CD8-positive, alpha-beta T cell (primary cell): ENCODE measurements at regions of chr9 and their contacts with region 1.

Region 1: GRCh38 chr9:101578378-101578777 is 16.4 kb downstream of the PPP3R2 start:
- DNase-seq: no peak
- ATAC-seq: no peak
- H3K4me3 ChIP-seq: no peak overlapping the region
- H3K4me3 Mint-ChIP-seq: no peak overlapping the region
- H3K27ac ChIP-seq: no peak overlapping the region
- H3K27ac Mint-ChIP-seq: no peak overlapping the region
- H3K4me1 ChIP-seq: peaks cover 17% of the 10 kb centered on the region
- H3K4me1 Mint-ChIP-seq: peaks cover 17% of the 10 kb centered on the region
- H3K27me3 ChIP-seq: no peaks in the 10 kb centered on the region
- H3K27me3 Mint-ChIP-seq: no peaks in the 10 kb centered on the region
- CTCF ChIP-seq: no peak

Region 2: GRCh38 chr9:101307051-101307450 is 271.3 kb before region 1 on chr9:
- CTCF ChIA-PET with region 1: no interaction called
- POLR2A ChIA-PET with region 1: no interaction called
- intact Hi-C with region 1: no loop called
- DNase-seq: no peak
- ATAC-seq: no peak
- H3K4me3 ChIP-seq: no peak overlapping the region
- H3K4me3 Mint-ChIP-seq: no peak overlapping the region
- H3K27ac ChIP-seq: no peak overlapping the region
- H3K27ac Mint-ChIP-seq: no peak overlapping the region
- H3K4me1 ChIP-seq: no peaks in the 10 kb centered on the region
- H3K4me1 Mint-ChIP-seq: no peaks in the 10 kb centered on the region
- H3K27me3 ChIP-seq: no peaks in the 10 kb centered on the region
- H3K27me3 Mint-ChIP-seq: peaks cover 9% of the 10 kb centered on the region
- CTCF ChIP-seq: no peak

Region 3: DNA sequence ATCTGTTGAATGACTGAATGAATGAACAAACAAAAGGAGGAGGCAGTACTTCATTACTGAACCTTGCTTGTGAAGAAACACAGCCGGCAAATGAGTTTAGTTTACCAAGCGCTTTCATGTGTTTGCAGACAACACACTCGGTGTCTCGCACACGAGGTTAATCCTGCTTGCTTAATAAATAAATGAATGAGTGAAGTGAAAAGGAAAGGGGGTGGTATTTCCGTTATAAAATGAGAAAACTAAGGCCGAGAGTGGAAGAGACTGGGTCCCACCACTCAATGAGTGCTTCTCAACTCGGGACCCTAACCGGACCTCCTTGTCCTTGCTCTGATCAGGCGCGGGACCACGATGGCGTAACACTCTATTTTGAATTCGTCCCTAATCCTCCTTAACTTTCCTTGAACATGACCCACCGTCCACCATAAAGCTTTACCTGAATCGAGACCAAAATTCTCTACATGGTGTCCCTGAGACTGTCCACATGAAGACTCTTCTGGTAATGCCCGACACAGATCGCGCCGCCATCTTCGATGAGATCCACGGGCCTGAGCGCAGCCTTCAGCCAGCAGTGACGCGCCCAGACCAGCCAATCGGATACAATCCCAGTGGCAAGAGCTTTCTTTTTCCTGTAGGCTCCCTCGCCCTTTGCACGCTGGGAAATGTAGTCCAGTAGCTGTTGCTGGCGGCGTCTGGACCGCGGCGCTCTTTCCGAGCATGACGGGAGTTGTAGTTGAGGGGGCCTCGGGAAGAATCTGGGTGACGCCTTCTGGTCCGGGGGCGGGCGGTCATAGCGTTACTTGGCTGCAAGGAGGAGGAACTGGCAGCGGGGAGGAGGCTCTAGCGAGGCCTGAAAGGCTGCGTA is 180.1 kb before region 1 on chr9 and contains the starts of genes MRPL50 and ZNF189:
- CTCF ChIA-PET with region 1: no interaction called
- POLR2A ChIA-PET with region 1: no interaction called
- intact Hi-C with region 1: no loop called
- DNase-seq: peak; percentile 89 to 99 (median 95)
- ATAC-seq: peak; percentile 93
- H3K4me3 ChIP-seq: peak within 1 kb of the TSS; percentile 87 to 91
- H3K4me3 Mint-ChIP-seq: peak within 1 kb of the TSS; percentile 97
- H3K27ac ChIP-seq: peak within 1 kb of the TSS; percentile 96 to 98
- H3K27ac Mint-ChIP-seq: peak within 1 kb of the TSS; percentile 99
- H3K4me1 ChIP-seq: peaks cover 54% of the 10 kb centered on the region
- H3K4me1 Mint-ChIP-seq: peaks cover 80% of the 10 kb centered on the region
- H3K27me3 ChIP-seq: no peaks in the 10 kb centered on the region
- H3K27me3 Mint-ChIP-seq: no peaks in the 10 kb centered on the region
- CTCF ChIP-seq: no peak
- total RNA-seq, gene MRPL50: 7.5 to 8.4 TPM
- total RNA-seq, gene ZNF189: 4.0 to 5.2 TPM

Region 4: DNA sequence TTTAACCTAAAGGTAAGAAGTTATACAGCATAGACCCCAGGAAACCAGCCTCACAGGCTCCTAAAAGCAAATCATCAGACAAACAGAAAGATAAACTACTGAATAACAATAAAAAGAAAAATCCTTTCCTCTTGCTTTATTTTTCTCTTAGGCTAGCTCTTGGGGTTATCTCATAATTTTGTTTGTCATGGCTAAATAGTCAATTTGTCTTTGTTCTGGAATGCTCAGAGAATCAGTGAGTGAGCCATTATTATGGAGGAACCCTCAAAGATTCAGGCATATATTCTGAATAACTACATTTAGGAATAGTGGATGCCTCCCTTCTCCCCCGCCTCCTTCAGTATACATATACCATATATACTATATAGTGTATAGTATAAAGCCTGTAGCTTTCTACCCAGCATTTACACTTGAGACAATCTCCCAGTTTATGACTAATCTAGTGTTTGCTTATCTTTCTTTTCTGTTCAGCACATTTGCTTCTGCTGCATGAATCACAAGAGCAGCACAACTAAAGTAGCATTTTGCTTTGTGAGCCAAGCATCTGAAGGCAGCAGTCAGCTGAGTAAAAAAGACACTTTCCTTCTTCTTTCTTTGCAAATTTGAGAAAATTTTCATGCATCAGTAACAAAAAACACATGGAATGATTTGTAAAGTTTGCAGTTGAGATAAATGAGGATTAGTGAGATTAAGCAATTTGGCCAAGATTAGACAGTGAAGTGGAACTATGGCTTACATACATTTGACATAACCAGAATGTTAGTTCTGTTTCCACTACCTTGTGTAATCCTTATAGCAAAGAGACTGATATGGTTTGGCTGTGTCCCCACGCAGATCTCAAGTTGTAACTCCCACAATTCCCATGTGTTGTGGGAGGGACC is 61.6 kb after region 1 on chr9:
- CTCF ChIA-PET with region 1: no interaction called
- POLR2A ChIA-PET with region 1: no interaction called
- intact Hi-C with region 1: no loop called
- DNase-seq: no peak
- ATAC-seq: no peak
- H3K4me3 ChIP-seq: no peak overlapping the region
- H3K4me3 Mint-ChIP-seq: no peak overlapping the region
- H3K27ac ChIP-seq: no peak overlapping the region
- H3K27ac Mint-ChIP-seq: no peak overlapping the region
- H3K4me1 ChIP-seq: no peaks in the 10 kb centered on the region
- H3K4me1 Mint-ChIP-seq: no peaks in the 10 kb centered on the region
- H3K27me3 ChIP-seq: no peaks in the 10 kb centered on the region
- H3K27me3 Mint-ChIP-seq: no peaks in the 10 kb centered on the region
- CTCF ChIP-seq: no peak

Region 5: DNA sequence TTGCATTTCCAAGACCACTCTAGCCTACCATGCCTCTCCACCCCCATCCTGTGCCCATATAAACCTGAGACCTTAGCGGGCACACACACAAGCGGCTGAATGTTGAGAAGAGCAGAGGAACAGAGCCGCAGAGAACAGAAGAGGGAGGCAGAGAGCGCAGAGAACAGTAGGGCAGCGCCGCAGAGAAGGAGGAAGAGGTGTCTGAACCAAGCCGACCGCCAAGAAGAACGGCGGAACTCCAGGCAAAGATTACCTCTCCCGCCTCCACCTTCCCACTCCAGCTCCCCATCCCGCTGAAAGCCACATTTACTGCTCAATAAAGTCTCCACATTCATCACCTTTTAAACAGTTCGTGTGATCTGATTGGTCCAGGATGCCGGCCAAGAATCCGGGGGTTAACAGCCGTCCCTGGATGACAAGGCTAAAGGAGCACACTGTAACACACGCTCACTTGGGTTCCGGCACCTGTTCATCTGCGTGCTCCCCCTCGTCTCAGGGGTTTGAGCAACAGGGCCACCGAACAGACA is 126.8 kb after region 1 on chr9:
- CTCF ChIA-PET with region 1: no interaction called
- POLR2A ChIA-PET with region 1: no interaction called
- intact Hi-C with region 1: loop called in 1 of 2 experiments (anchors 10 kb)
- DNase-seq: peak in 6 of 9 experiments; percentile 20 to 58 (median 27)
- ATAC-seq: peak; percentile 82
- H3K4me3 ChIP-seq: peak overlapping the region; percentile 34 to 43
- H3K4me3 Mint-ChIP-seq: peak overlapping the region; percentile 85
- H3K27ac ChIP-seq: no peak overlapping the region
- H3K27ac Mint-ChIP-seq: peak overlapping the region; percentile 79
- H3K4me1 ChIP-seq: peaks cover 4% of the 10 kb centered on the region
- H3K4me1 Mint-ChIP-seq: peaks cover 8% of the 10 kb centered on the region
- H3K27me3 ChIP-seq: no peaks in the 10 kb centered on the region
- H3K27me3 Mint-ChIP-seq: peaks cover 8% of the 10 kb centered on the region
- CTCF ChIP-seq: no peak